Cardiac septum (tissue), 1 donor: ENCODE measurements at regions of chr9 and their contacts with region 1.

Region 1: DNA sequence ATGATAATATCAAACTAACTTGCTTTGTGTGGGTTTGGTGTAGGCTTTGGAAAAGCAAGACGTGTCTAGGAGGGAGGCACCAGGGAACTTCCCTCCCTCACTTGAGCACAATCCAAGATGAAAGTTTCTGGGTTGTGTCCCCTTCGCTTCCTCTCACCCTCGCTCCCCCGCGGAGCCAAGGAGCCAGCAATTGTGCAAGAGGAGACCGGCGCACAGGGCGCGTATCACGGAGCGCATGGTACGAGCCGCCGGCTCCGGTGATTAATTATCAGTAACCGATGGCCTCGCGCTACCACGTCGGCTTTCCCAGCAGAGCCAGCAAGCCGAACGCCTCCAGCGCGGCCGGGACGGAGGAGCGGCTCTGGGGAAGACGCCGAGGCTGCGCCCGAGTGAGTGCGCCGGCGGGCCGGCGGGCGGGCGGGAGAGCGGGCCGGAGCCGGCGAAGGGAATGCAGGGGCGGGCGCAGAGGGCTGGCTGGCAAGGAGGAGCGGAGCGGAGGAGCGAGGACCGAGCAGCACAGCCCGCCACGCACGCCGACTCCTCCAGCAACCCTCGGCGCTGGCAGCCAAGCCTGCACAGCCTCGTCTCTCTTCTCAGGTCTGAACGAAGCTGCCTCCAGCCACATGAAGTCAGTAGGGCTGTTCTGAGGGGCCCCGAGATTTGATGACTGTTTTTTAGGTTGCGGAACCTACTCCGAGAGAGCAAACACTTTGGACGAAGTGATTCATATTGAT is 143.6 kb downstream of the BNC2 start:
- DNase-seq: peak; percentile 84

Region 2: GRCh38 chr9:16191691-16192402 is 535.0 kb before region 1 on chr9:
- intact Hi-C with region 1: loop called (anchors 10 kb)
- DNase-seq: no peak

Region 3: GRCh38 chr9:16869882-16870595 is 143.2 kb after region 1 on chr9:
- intact Hi-C with region 1: loop called (anchors 5 kb)
- DNase-seq: no peak